ENCODE measurements at regions of chr6 and their contacts with region 1.

Region 1: DNA sequence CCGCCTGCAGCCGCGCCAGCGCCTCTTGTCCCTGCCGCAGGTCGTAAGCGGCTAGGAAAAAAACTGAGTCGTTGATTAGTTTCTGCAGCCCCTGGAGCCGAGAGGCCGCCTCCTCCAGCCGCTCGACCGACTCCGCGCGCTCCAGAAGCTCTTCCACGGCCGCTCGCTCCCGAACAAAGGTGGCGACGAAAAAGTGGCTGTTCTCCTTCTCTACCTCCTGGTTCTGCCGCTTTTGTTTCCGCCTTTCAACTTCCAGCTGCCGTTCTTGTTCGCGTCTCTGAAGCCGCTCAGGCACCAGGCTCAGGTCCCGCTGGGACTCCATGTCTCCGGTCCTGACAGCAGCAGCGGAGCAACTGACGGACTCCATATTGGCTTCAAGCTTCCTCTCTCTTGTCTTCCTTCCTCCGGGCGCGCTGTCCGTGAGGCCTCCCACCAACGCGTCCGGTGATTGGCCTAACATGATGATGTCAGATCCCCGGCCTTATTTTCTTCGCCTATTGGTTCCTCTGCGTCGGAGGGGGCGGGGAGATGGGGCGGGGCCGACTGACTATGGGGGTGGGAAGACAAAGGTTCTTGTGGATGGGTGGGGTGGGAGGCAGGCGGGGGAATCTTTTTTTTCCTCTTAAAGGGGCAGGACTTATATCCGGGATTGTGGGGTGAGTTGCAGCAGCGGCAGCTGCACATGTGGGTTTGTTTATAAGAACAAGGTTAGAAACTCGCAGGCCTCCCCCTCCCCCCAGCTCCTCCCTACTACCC is at the start of gene TBCC:
- DNase-seq: peak; percentile 93
- ATAC-seq: peak; percentile 84
- H3K4me3 ChIP-seq: peak within 1 kb of the TSS; percentile 100
- H3K27ac ChIP-seq: peak within 1 kb of the TSS; percentile 98
- H3K4me1 ChIP-seq: peaks cover 10% of the 10 kb centered on the region
- H3K27me3 ChIP-seq: no peaks in the 10 kb centered on the region
- CTCF ChIP-seq: no peak
- EP300 ChIP-seq: no peak
- POLR2A ChIP-seq: peak; percentile 99
- RAD21 ChIP-seq: no peak
- polyA plus RNA-seq, gene TBCC: 2.5 to 6.3 TPM

Region 2: DNA sequence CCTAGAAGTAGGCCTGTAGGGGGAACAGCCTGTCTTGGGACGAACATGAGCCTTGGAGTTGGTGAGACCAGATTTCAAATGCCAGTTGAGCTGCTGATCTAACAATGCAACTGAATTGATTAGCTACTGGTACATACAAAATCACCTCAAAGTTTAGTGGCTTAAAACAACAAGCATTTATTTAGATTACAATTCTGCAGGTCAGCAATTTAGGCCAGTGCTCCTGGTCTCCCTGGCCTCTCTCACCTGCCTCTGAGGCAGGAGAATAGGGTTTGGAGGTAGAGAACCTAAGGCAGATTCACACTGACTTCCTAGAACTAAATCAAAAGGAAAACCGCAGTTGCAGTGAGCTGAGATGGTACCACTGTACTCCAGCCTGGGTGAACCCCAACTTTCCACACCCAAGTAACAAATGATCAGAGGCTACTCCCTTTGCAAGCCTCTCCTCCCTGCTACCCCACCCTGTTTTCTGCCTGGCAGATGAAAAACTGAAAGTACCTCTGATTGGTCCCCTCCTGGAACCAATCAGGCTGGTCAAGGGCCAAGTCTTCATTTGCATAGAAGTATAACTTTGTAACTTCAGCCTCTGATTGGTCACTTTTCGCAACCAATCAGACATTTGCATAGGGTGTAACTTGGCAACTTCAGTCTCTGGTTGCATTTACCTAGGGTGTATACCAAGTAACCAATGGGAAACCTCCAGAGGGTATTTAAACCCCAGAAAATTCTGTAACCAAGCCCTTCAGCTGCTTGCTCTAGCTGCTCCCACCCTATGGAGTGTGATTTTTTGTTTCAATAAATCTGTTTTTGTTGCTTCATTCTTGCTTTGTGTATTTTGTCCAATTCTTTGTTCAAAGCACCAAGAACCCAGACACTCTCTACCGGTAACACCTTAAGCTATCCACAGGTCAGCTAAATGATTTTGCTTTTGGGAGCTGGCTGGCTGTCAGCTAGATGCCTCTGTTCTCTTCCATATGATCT is 190.1 kb before region 1 on chr6:
- CTCF ChIA-PET with region 1: no interaction called
- POLR2A ChIA-PET with region 1: no interaction called
- RAD21 ChIA-PET with region 1: no interaction called
- SMC1A ChIA-PET with region 1: no interaction called
- in situ Hi-C with region 1: no loop called
- intact Hi-C with region 1: no loop called
- DNase-seq: no peak
- ATAC-seq: peak; percentile 84
- H3K4me3 ChIP-seq: no peak overlapping the region
- H3K27ac ChIP-seq: no peak overlapping the region
- H3K4me1 ChIP-seq: no peaks in the 10 kb centered on the region
- H3K27me3 ChIP-seq: no peaks in the 10 kb centered on the region
- CTCF ChIP-seq: no peak
- EP300 ChIP-seq: no peak
- POLR2A ChIP-seq: no peak
- RAD21 ChIP-seq: no peak

Region 3: GRCh38 chr6:42726485-42727086 is 19.3 kb before region 1 on chr6:
- CTCF ChIA-PET with region 1: interaction called, 15 read pairs
- POLR2A ChIA-PET with region 1: interaction called, 8 read pairs
- RAD21 ChIA-PET with region 1: interaction called, 10 read pairs
- SMC1A ChIA-PET with region 1: interaction called, 15 read pairs
- in situ Hi-C with region 1: no loop called
- intact Hi-C with region 1: no loop called
- DNase-seq: peak; percentile 66
- ATAC-seq: peak; percentile 96
- H3K4me3 ChIP-seq: peak overlapping the region; percentile 58; the same call in 1 of the 2 replicates
- H3K27ac ChIP-seq: peak overlapping the region; percentile 60
- H3K4me1 ChIP-seq: peaks cover 10% of the 10 kb centered on the region; the same call in 1 of the 2 replicates
- H3K27me3 ChIP-seq: no peaks in the 10 kb centered on the region
- CTCF ChIP-seq: peak; percentile 76 to 97 (median 89)
- EP300 ChIP-seq: no peak
- POLR2A ChIP-seq: no peak
- RAD21 ChIP-seq: peak; percentile 92

Region 4: GRCh38 chr6:42771741-42772100 is 25.8 kb after region 1 on chr6:
- CTCF ChIA-PET with region 1: interaction called, 25 read pairs
- POLR2A ChIA-PET with region 1: interaction called, 140 read pairs
- RAD21 ChIA-PET with region 1: interaction called, 227 read pairs
- SMC1A ChIA-PET with region 1: interaction called, 92 read pairs
- in situ Hi-C with region 1: no loop called
- intact Hi-C with region 1: loop called (anchors 1 kb)
- DNase-seq: no peak
- ATAC-seq: peak; percentile 14; the same call in 1 of the 3 replicates
- H3K4me3 ChIP-seq: peak overlapping the region; percentile 51
- H3K27ac ChIP-seq: peak overlapping the region; percentile 54
- H3K4me1 ChIP-seq: peaks cover 49% of the 10 kb centered on the region
- H3K27me3 ChIP-seq: no peaks in the 10 kb centered on the region
- CTCF ChIP-seq: no peak
- EP300 ChIP-seq: no peak
- POLR2A ChIP-seq: no peak
- RAD21 ChIP-seq: no peak

Region 5: DNA sequence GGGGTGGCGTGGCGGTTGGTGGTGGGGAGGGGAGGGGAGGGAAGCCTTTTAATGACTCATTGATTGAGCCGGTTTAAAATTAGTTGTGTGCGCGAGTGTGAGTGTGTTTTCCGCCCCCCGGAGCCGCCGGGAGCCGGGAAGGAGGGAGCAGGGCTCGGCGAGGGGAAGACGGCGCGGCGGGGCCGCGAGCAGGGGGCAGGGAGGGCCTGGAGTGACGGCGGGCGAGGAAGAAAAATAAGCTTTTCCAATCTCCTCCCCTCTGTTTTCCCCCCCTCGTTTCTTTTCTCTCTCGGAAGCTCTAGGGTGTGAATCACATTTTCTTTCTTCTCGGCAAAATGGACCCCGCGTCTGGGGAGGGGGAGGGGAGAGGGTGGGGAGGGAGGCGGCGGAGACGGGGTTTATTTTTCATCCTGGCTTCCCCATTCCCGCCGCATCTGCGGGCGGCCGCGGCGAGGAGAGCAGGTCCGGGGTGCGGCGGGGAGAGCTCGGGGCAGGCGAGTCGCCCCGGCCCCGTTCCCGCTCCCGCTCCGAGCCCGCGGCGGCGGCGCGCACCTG is 36.8 kb after region 1 on chr6:
- CTCF ChIA-PET with region 1: interaction called, 11 read pairs
- POLR2A ChIA-PET with region 1: interaction called, 82 read pairs
- RAD21 ChIA-PET with region 1: interaction called, 227 read pairs
- SMC1A ChIA-PET with region 1: interaction called, 10 read pairs
- in situ Hi-C with region 1: no loop called
- intact Hi-C with region 1: loop called (anchors 1 kb)
- DNase-seq: no peak
- ATAC-seq: peak; percentile 41
- H3K4me3 ChIP-seq: peak overlapping the region; percentile 86
- H3K27ac ChIP-seq: peak overlapping the region; percentile 99
- H3K4me1 ChIP-seq: peaks cover 31% of the 10 kb centered on the region
- H3K27me3 ChIP-seq: no peaks in the 10 kb centered on the region
- CTCF ChIP-seq: no peak
- EP300 ChIP-seq: no peak
- POLR2A ChIP-seq: no peak
- RAD21 ChIP-seq: no peak

Region 6: DNA sequence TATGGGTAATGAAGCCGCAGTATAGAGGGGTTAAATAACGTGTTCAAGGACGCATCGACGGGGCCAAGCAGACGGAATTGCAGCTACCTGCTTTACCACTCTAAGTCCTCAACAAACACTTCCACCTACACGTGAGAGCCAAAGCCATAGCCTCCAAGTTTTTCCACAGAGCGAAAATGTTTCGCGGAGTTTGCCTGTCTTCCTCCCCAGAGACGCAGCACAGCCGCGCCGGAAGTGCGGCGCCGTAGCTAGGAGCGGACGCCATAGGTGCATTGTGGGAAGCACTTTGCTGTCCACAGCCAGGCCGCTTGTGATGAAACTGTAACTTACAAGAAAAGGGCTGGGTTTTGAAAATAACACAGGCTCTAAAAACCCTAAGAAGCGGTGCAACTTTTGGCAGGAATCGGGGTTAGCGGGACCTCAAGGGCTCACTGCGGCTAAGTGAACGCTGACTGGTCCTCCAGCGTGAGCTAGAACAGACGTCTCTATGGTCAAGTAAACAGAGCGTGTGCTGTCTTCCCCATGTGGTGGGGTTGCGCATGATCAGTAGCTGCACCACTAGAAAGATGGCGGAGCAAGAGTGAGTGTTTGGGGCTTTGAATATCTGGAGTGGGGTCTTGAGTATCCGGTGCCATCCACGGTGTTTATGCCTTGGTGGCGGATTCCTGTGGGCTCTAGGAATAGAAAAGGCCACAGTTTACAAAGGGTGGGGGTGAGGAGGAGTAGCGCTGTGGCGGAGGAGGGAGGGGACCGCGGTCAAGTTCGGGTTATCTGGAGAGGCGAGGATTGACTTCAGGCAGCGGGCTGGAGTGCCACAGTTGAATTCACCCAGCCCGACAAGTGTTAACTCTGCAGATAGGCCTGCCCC is 133.7 kb after region 1 on chr6 and contains the start of gene RPL7L1:
- CTCF ChIA-PET with region 1: interaction called, 3 read pairs
- POLR2A ChIA-PET with region 1: interaction called, 7 read pairs
- RAD21 ChIA-PET with region 1: interaction called, 12 read pairs
- SMC1A ChIA-PET with region 1: interaction called, 6 read pairs
- in situ Hi-C with region 1: no loop called
- intact Hi-C with region 1: loop called (anchors 1 kb)
- DNase-seq: peak; percentile 80
- ATAC-seq: peak; percentile 96
- H3K4me3 ChIP-seq: peak within 1 kb of the TSS; percentile 86
- H3K27ac ChIP-seq: peak within 1 kb of the TSS; percentile 78
- H3K4me1 ChIP-seq: no peaks in the 10 kb centered on the region
- H3K27me3 ChIP-seq: no peaks in the 10 kb centered on the region
- CTCF ChIP-seq: 0 out of 6 replicates have a peak, but pooled peaks of 1 of the 3 experiments have one; percentile 2
- EP300 ChIP-seq: no peak
- POLR2A ChIP-seq: peak; percentile 92
- RAD21 ChIP-seq: no peak
- polyA plus RNA-seq, gene RPL7L1: 98.2 to 119 TPM

Region 7: DNA sequence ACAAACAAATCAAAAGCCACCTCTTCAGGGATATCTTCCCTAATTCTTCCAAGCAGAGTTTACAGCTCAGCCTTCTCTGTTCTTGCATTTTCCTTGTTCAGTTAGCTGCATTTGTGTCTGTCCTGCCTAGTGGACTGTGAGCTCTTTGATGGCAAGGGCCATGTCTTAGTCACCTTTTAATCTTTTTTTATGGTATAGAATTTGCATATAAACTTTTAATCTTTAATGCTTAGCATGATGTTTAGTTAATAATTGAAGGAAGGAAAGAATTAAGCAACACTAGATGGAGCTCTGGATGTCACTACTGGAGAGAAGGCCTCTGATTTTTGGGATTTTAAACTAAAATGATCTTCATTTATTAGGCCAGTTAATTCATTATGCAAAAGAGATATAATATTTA is 250.6 kb after region 1 on chr6:
- CTCF ChIA-PET with region 1: no interaction called
- POLR2A ChIA-PET with region 1: no interaction called
- RAD21 ChIA-PET with region 1: no interaction called
- SMC1A ChIA-PET with region 1: no interaction called
- in situ Hi-C with region 1: no loop called
- intact Hi-C with region 1: no loop called
- DNase-seq: no peak
- ATAC-seq: no peak
- H3K4me3 ChIP-seq: no peak overlapping the region
- H3K27ac ChIP-seq: no peak overlapping the region
- H3K4me1 ChIP-seq: no peaks in the 10 kb centered on the region
- H3K27me3 ChIP-seq: no peaks in the 10 kb centered on the region
- CTCF ChIP-seq: no peak; a peak in 1 of 6 replicates
- EP300 ChIP-seq: no peak
- POLR2A ChIP-seq: no peak
- RAD21 ChIP-seq: no peak

Region 8: DNA sequence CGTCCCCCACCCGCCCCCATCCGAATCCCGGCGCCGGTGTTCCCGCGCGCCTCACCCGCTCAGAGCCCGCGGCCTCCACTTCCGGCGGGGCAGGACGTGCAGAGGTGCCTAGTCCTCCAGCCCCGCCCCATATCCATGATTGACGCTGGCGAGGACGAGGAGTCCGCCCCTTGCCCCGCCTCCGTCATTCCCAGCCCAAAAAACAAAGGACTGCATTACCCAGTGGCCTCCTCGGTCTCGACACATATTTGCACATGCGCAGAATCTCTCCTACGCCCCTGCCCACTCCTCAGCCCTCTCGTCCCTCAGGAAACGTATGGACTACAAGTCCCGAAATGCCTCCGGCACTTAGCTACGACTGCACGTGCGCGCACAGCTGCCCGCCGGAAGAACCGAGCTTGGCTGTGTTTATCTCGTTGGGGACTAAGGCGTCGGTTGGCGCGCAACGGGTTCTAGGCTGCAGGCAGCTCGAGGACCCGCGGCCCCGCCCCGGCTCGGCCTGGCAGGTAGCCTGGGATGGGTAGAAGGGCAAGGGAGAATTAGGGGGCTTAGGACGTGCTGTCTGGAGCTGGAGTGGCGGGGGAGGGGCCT is 268.1 kb after region 1 on chr6 and contains the starts of genes KLHDC3 and MEA1:
- CTCF ChIA-PET with region 1: no interaction called
- POLR2A ChIA-PET with region 1: interaction called, 10 read pairs
- RAD21 ChIA-PET with region 1: no interaction called
- SMC1A ChIA-PET with region 1: no interaction called
- in situ Hi-C with region 1: no loop called
- intact Hi-C with region 1: no loop called
- DNase-seq: peak; percentile 100
- ATAC-seq: peak; percentile 96
- H3K4me3 ChIP-seq: peak within 1 kb of the TSS; percentile 85
- H3K27ac ChIP-seq: peak within 1 kb of the TSS; percentile 60
- H3K4me1 ChIP-seq: peaks cover 7% of the 10 kb centered on the region
- H3K27me3 ChIP-seq: no peaks in the 10 kb centered on the region
- CTCF ChIP-seq: no peak
- EP300 ChIP-seq: no peak
- POLR2A ChIP-seq: peak; percentile 82
- RAD21 ChIP-seq: no peak
- polyA plus RNA-seq, gene KLHDC3: 2.4 to 8.9 TPM
- polyA plus RNA-seq, gene MEA1: 90.7 to 105 TPM

Measured in GM12878 (cell line).